Activated CD4-positive, alpha-beta memory T cell treated with anti-CD3 and anti-CD28 coated beads for 36 hours (primary cell): ENCODE measurements at regions of chr14 and their contacts with region 1.

Region 1: DNA sequence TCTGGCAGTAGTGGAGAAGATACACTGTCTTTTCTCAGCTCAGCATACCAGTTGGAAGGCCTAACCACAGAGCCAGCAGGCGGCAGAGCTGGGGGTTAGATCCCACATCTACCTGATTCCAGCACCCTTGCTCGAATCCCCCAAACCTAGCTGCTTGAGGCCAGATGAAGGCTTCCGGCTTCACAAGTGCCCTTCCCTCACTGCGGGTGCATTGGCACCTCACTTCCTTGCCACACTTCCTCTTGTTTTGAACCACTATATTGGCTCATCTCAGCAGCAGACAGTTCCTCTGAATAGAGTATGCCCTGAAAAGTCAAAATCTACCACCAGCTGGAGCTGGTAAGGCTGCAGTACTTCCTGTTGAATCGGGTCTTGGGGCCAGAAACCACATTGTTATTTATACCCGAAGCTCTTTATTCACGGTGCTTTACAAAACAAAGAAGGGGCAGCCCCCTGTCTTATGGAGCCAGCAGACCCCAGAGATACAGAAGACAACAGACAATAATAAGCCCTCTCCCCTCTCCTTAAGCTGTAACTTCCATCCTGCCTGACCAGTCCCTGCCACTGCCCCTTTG is 233.7 kb downstream of the EFCAB11 start:
- DNase-seq: peak; percentile 81
- H3K4me3 Mint-ChIP-seq: peak overlapping the region; percentile 45
- H3K27ac Mint-ChIP-seq: peak overlapping the region; percentile 94
- H3K4me1 Mint-ChIP-seq: peaks cover 70% of the 10 kb centered on the region
- H3K27me3 Mint-ChIP-seq: no peaks in the 10 kb centered on the region

Region 2: GRCh38 chr14:89430391-89431236 is 290.2 kb before region 1 on chr14:
- CTCF ChIA-PET with region 1: no interaction called
- POLR2A ChIA-PET with region 1: interaction called, 5 read pairs
- intact Hi-C with region 1: loop called (anchors 2 kb)
- DNase-seq: peak; percentile 75
- H3K4me3 Mint-ChIP-seq: peak overlapping the region; percentile 67
- H3K27ac Mint-ChIP-seq: peak overlapping the region; percentile 88
- H3K4me1 Mint-ChIP-seq: peaks cover 69% of the 10 kb centered on the region
- H3K27me3 Mint-ChIP-seq: no peaks in the 10 kb centered on the region

Region 3: GRCh38 chr14:89509891-89510290 is 210.9 kb before region 1 on chr14:
- CTCF ChIA-PET with region 1: no interaction called
- POLR2A ChIA-PET with region 1: interaction called, 3 read pairs
- intact Hi-C with region 1: loop called (anchors 2 kb)
- DNase-seq: no peak
- H3K4me3 Mint-ChIP-seq: peak overlapping the region; percentile 77
- H3K27ac Mint-ChIP-seq: peak overlapping the region; percentile 93
- H3K4me1 Mint-ChIP-seq: peaks cover 72% of the 10 kb centered on the region
- H3K27me3 Mint-ChIP-seq: no peaks in the 10 kb centered on the region

Region 4: DNA sequence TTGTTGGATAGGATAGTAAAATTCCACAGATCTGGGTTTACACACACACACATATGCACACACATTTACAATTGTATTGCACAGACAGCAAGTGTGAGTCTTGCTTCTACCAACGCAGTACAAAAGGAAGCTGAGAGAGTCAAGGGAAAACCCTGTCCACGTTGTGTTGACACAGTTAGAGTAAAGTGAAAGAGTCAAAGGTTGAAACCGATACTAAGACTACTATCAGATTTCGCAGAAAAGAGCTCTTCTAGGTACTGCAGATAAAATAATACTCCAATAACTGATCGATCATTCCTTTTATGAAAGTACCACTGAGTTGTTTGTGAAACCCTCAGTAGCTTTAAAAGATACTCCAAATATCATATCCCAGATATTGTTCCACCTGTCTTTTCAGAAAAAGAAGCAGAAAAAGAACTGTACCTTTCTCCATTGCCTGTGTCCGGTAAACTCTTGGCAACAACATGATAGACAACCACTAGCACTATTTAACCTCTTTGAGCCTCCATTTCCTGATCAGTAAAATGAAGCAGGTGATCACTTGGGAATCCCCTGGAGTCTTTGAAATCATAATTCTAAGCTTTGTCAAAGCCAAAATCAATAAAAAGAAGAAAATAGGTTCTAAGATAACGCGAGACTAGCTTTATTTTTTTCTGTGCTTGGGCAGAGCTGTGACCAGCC is 79.2 kb before region 1 on chr14:
- CTCF ChIA-PET with region 1: no interaction called
- POLR2A ChIA-PET with region 1: interaction called, 8 read pairs
- intact Hi-C with region 1: loop called (anchors 1 kb)
- DNase-seq: peak; percentile 35
- H3K4me3 Mint-ChIP-seq: peak overlapping the region; percentile 53
- H3K27ac Mint-ChIP-seq: peak overlapping the region; percentile 83
- H3K4me1 Mint-ChIP-seq: peaks cover 54% of the 10 kb centered on the region
- H3K27me3 Mint-ChIP-seq: no peaks in the 10 kb centered on the region

Region 5: GRCh38 chr14:89701211-89702043 is 19.4 kb before region 1 on chr14:
- CTCF ChIA-PET with region 1: interaction called, 6 read pairs
- POLR2A ChIA-PET with region 1: interaction called, 15 read pairs
- intact Hi-C with region 1: loop called (anchors 1 kb)
- DNase-seq: peak; percentile 89
- H3K4me3 Mint-ChIP-seq: peak overlapping the region; percentile 64
- H3K27ac Mint-ChIP-seq: peak overlapping the region; percentile 81
- H3K4me1 Mint-ChIP-seq: peaks cover 44% of the 10 kb centered on the region
- H3K27me3 Mint-ChIP-seq: no peaks in the 10 kb centered on the region

Region 6: DNA sequence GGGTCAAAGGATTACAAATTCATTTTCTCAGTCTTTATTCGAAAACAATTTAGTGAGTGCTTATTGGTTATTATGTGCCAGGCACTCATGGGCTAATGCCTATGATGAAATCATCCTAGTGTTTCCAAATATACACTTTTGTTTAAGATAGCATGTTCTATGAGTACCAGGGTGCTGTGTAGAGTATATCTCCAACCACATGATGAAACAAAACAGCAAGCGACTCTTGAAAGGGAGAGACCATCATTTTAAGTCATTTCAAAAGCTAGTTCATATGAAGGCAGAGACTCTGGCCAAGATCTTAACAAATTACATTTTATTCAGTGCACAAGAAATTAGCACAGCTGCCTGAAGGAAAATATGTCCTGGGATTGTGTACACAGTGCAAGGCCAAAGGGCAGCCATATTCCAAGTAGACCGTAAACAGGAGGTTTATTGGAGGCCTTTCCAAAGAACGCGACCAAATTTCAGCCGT is 29.5 kb after region 1 on chr14:
- CTCF ChIA-PET with region 1: interaction called, 3 read pairs
- POLR2A ChIA-PET with region 1: interaction called, 4 read pairs
- intact Hi-C with region 1: loop called (anchors 1 kb)
- DNase-seq: no peak
- H3K4me3 Mint-ChIP-seq: no peak overlapping the region
- H3K27ac Mint-ChIP-seq: peak overlapping the region; percentile 70
- H3K4me1 Mint-ChIP-seq: peaks cover 45% of the 10 kb centered on the region
- H3K27me3 Mint-ChIP-seq: no peaks in the 10 kb centered on the region

Region 7: GRCh38 chr14:89767861-89768268 is 47.0 kb after region 1 on chr14:
- CTCF ChIA-PET with region 1: no interaction called
- POLR2A ChIA-PET with region 1: no interaction called
- intact Hi-C with region 1: loop called (anchors 5 kb)
- DNase-seq: peak; percentile 75
- H3K4me3 Mint-ChIP-seq: no peak overlapping the region
- H3K27ac Mint-ChIP-seq: peak overlapping the region; percentile 39
- H3K4me1 Mint-ChIP-seq: peaks cover 18% of the 10 kb centered on the region
- H3K27me3 Mint-ChIP-seq: peaks cover 2% of the 10 kb centered on the region